Activated CD4-positive, alpha-beta T cell treated with anti-CD3 and anti-CD28 coated beads for 36 hours (primary cell): ENCODE measurements at regions of chr7 and their contacts with region 1.

Region 1: DNA sequence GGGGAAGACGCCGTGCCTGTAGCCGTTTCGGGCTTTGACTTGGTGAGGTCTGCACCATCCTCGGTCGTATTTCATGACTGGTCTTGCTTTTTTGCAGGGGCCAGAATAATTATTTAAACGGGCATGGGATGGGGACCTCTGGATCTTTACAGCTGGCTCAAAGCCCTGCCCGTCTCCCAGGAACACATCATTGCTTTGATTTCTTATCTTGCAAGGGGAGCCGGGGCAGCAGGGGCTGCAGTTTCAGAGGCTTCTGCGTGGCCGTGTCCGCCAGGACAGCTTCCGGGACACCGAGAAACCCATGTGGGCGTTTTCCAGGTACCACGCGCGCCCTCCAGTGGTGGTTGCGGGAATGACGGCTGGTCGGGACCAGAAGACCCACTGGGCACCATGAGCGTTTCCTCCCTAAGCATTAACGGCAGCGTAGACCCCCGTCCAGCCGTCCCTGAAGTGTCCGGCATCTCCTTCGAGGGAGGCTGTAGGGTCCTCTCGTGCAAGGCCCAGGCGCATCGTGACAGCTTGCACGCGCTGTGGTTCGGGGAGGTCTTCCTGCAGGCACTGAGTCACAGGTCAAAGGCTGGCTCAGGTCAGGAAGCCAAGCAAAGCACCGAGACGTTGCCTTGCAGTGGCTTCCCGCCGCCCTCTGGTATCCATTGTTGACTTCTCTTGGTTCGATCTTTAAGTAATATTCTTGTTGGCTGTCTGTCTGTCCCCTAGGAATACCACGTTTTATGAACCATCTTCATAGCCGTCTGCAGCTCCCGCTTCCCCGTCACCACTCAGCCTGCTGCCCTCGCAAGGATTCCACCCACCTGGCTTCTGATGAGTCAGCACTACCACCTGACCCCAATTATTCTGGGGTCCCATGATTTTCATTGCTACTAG is 16.2 kb upstream of the ZFAND2A start:
- DNase-seq: peak; percentile 92
- ATAC-seq: peak; percentile 82
- H3K4me3 Mint-ChIP-seq: peak overlapping the region; percentile 45
- H3K27ac Mint-ChIP-seq: peak overlapping the region; percentile 43
- H3K4me1 Mint-ChIP-seq: peaks cover 11% of the 10 kb centered on the region
- H3K27me3 Mint-ChIP-seq: peaks cover 8% of the 10 kb centered on the region

Region 2: DNA sequence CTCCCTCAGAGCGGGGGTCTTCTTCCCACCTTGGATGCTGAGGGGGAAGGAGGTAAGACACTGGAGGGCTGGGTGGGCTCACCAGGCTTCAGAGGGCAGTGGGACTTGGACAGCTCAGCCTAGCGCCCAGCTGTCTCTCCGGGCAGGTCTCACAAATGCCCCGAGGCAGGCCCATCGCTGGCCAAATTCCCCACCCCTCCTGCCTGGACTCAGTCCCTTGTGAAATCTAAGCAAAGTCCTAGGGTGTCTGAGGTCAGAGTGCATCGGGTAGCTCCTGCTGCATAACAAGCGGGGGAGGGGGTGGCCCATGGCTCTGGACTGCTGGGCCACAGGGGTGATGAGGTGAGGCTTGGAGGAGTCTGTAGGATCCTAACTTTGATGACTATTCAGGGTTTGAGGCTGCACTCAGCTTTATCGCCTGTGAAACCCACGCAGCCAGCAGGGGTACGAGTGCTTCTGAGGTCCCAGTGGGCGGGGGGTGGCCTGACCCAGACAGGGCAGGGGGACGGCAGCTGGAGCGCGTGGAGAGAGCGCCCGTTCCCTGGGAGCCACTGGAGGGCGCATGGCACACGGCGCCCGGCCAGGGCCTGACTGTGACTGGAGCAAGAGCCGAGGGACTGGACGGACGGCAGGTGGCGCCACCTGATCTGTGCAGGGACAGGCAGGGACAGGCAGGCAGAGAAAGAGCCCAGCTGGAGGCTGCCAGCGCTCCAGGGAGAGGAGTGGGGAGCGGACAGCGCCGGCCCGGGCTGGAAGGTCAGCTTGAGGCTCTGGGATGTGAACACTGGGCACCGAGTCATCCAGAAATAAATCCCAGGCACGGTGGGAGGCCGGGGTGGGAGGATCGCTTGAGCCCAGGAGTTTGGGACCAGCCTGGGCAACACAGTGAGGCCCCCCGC is 183.3 kb before region 1 on chr7:
- CTCF ChIA-PET with region 1: interaction called, 13 read pairs
- POLR2A ChIA-PET with region 1: no interaction called
- intact Hi-C with region 1: loop called (anchors 1 to 2 kb)
- DNase-seq: peak; percentile 99
- ATAC-seq: peak; percentile 100
- H3K4me3 Mint-ChIP-seq: no peak overlapping the region
- H3K27ac Mint-ChIP-seq: no peak overlapping the region
- H3K4me1 Mint-ChIP-seq: peaks cover 3% of the 10 kb centered on the region
- H3K27me3 Mint-ChIP-seq: no peaks in the 10 kb centered on the region

Region 3: DNA sequence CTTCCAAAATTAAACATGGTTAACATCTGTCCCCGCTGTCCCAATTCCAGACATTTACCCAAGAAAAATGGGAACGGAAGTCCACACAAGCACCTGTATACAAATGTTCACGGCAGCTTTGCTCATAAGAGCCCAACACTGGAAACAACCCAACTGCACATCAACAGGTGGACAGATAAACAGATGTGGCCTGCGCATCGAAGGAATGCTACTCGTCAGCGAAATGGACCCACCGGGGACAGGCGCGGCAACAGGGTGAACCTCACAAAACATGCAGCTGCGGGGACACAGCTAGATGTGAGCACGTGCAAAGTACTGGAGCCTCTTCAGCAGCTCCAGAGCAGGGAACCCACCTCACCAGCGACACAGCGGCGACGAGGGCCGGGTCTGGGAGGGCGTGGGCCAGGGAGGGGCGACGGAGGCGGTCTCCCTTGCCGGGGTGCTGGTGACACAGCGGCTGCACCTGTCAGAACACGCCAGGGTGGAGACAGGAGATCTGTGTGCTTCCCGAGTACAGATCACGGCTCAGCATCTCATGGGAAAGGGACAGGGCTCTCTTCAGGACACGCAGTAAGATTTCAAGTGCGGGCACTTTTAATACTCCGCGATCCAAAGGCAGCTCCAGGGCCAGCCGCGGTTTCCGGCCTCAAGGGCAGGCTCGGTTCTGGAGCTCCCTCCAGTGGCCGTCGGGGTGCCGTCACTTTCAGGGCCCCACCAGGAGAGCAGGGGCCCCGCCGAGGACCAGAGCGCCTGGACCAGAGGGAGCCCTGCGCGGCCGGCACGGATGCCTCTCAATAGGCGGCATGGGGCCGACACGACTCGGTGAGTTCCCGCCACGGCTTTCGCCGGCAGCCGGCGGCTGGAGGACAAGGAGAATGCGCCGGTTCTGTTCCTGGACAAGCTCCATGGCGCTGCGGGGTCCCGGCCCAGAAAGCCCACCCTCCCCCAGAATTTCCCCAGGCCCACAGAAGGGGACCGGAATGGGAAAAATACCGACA is 110.6 kb before region 1 on chr7:
- CTCF ChIA-PET with region 1: interaction called, 12 read pairs
- POLR2A ChIA-PET with region 1: no interaction called
- intact Hi-C with region 1: no loop called
- DNase-seq: peak; percentile 92
- ATAC-seq: peak; percentile 98
- H3K4me3 Mint-ChIP-seq: peak overlapping the region; percentile 36
- H3K27ac Mint-ChIP-seq: no peak overlapping the region
- H3K4me1 Mint-ChIP-seq: peaks cover 5% of the 10 kb centered on the region
- H3K27me3 Mint-ChIP-seq: peaks cover 2% of the 10 kb centered on the region

Region 4: DNA sequence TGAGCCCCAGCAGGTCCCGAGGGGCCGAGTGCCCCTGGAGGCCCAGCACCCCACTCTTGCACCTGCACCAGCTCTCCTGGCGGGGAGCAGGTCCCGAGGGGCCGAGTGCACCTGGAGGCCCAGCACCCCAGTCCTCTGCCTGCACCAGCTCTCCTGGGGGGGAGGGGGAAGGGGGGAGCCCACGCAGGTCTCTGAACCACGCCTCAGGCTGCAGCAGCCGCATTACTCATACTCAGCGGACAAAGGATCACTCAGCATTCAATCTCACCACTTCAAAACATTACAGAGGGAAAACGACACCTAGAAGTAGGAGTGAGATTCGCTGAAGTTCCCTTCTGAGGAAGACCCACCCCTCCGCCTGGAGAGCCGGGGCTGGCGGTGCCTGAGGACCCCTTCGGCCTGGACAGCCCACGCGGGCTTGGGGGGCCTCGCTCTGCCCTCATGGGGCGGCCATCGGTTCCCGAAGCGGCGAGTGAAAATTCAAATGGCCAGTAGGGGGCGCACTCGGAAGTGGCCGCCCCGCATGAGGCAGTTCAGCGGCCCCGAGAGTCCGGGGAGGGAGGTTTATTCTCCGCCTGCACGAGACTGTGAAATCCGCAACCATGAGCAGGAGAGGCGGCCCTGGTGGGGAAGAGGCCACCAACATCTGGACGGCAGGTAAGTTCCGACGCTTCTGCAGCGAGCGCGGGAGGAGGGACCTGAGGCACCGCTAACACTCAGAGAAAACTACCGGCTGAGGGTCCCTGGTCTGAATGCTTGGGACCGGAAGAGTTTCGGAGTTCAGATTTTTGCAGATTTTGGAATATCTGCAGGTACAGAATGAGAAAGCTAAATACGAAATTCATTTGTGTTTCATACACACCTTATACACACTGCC is 89.4 kb before region 1 on chr7:
- CTCF ChIA-PET with region 1: interaction called, 11 read pairs
- POLR2A ChIA-PET with region 1: no interaction called
- intact Hi-C with region 1: loop called (anchors 1 to 5 kb)
- DNase-seq: peak; percentile 86
- ATAC-seq: peak; percentile 88
- H3K4me3 Mint-ChIP-seq: peak overlapping the region; percentile 53
- H3K27ac Mint-ChIP-seq: peak overlapping the region; percentile 29
- H3K4me1 Mint-ChIP-seq: peaks cover 12% of the 10 kb centered on the region
- H3K27me3 Mint-ChIP-seq: no peaks in the 10 kb centered on the region

Region 5: DNA sequence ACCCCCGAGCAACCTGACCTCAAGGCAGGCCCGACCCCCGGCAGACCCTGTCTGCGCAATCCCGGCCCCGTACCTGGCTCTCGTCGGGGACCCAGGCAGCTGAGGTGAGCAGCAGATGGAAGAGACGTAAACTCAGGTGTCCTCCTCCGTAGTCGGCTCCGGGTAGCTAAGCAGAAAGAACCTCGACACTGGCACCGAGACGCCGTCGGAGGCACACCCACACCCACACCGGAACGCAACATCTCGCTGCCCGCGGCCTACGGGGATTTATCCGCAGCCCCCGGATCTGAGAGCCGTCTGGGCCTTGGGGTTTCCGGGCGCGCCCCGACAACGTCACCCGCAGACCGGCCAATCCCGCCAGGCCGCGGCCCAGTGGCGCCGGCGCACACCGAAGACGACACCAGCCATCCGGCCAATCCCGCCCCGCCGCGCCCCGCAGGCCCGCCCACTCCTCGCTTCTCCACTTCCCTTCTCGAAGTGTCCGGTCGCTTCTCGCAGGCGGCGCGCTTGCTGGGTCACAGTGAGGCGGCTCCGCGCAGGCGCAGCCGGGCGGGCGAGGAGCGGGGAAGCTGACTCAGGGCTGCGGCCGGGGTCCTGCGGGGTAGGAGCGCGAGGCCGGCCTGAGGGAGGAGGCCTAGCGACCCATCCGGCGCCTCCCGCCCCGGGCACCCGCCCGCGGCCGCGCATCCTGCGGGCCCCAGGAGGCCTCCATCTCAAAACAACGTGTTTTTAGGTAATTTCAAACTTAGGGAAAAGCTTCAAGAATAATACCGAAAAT is 16.1 kb before region 1 on chr7 and contains the start of gene ZFAND2A:
- CTCF ChIA-PET with region 1: interaction called, 6 read pairs
- POLR2A ChIA-PET with region 1: interaction called, 3 read pairs
- intact Hi-C with region 1: loop called in 1 of 2 experiments (anchors 2 kb)
- DNase-seq: peak; percentile 99
- ATAC-seq: peak; percentile 98
- H3K4me3 Mint-ChIP-seq: peak within 1 kb of the TSS; percentile 84
- H3K27ac Mint-ChIP-seq: peak within 1 kb of the TSS; percentile 90
- H3K4me1 Mint-ChIP-seq: peaks cover 22% of the 10 kb centered on the region
- H3K27me3 Mint-ChIP-seq: no peaks in the 10 kb centered on the region
- total RNA-seq, gene ZFAND2A: 21.6 to 25.2 TPM

Region 6: DNA sequence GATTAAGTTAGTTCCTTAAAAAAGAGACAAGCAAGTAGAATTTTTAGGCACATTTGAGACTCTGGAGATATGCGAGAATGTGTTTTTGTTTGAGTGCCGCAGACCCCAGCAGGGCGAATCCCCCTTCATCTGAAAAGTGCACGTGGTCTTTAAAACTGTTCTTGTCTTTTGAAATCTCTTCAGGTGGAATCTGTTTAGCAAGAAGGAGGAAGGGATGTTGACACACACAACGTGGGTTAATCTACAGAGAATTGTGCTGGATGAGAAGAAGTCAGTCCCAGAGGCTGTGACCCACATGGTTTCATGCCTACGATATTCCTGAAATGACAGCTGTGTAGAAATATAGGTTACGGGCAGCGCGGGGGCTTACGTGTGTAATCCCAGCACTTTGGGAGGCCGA is 10.9 kb after region 1 on chr7:
- CTCF ChIA-PET with region 1: interaction called, 35 read pairs
- POLR2A ChIA-PET with region 1: interaction called, 5 read pairs
- intact Hi-C with region 1: no loop called
- DNase-seq: no peak
- ATAC-seq: no peak
- H3K4me3 Mint-ChIP-seq: no peak overlapping the region
- H3K27ac Mint-ChIP-seq: no peak overlapping the region
- H3K4me1 Mint-ChIP-seq: peaks cover 6% of the 10 kb centered on the region
- H3K27me3 Mint-ChIP-seq: peaks cover 11% of the 10 kb centered on the region

Region 7: GRCh38 chr7:1193593-1194424 is 17.6 kb after region 1 on chr7:
- CTCF ChIA-PET with region 1: interaction called, 35 read pairs
- POLR2A ChIA-PET with region 1: no interaction called
- intact Hi-C with region 1: no loop called
- DNase-seq: peak; percentile 67
- ATAC-seq: peak; percentile 75
- H3K4me3 Mint-ChIP-seq: no peak overlapping the region
- H3K27ac Mint-ChIP-seq: no peak overlapping the region
- H3K4me1 Mint-ChIP-seq: peaks cover 10% of the 10 kb centered on the region
- H3K27me3 Mint-ChIP-seq: peaks cover 8% of the 10 kb centered on the region

Region 8: DNA sequence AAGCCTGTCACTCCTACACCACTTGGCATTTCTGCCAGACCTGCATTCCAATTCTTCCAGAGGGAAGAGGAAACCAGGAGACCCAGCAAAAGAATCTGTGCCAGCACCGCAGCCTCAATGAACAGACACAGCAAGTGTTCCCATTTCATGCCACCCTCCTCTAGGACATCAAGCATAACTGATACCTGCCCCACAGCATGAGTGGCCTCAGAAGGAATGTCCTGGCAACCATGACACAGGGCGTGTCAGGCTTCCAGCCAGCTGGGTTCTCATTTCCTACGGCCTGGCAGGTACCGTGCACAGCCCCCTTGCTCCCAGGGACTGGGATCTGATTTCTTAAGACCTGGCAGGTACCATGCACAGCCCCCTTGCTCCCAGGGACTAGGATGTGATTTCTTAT is 1048.7 kb after region 1 on chr7:
- CTCF ChIA-PET with region 1: no interaction called
- POLR2A ChIA-PET with region 1: no interaction called
- intact Hi-C with region 1: no loop called
- DNase-seq: no peak
- ATAC-seq: no peak
- H3K4me3 Mint-ChIP-seq: no peak overlapping the region
- H3K27ac Mint-ChIP-seq: no peak overlapping the region
- H3K4me1 Mint-ChIP-seq: peaks cover 4% of the 10 kb centered on the region
- H3K27me3 Mint-ChIP-seq: no peaks in the 10 kb centered on the region